Right cardiac atrium (tissue), 5 donors: ENCODE measurements at regions of chr5 and their contacts with region 1.

Region 1: DNA sequence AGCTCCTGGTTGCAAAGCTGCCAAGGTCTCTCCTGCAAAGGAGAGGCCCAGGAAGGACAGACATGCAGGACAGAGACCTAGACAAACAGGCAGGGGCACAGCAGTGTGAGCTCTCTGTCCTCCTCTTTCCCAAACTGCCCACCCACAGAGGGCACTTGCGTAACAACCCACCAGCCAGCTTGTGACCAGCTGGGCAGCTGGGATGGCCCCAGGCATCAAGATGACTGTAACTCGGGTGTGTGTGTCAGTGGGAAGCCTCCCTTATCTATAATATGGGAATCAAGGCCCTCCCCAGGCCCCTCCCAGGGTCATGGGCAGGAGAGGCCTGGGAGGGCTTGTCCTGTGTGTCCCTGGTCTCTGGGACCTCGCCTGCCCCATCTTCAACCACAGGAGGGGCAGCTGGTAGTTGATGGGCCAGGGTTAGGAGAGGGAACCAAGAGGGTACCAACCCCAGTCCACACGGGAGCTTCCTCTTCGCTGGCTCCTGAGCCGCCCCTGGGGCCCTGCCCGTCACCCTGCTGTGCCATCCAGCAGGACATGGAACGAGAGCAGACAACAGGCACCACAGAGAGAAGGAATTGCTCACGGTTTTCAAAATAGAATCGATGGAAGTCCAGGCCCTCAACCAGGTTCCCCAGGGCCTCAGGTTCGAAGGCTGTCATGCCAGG is 37.9 kb downstream of the SLC6A7 start:
- DNase-seq: no peak
- ATAC-seq: no peak
- H3K4me3 ChIP-seq: no peak overlapping the region
- H3K27ac ChIP-seq: no peak overlapping the region
- H3K4me1 ChIP-seq: no peaks in the 10 kb centered on the region
- H3K27me3 ChIP-seq: no peaks in the 10 kb centered on the region

Region 2: GRCh38 chr5:150036513-150036912 is 191.2 kb before region 1 on chr5:
- intact Hi-C with region 1: loop called in 1 of 4 experiments (anchors 10 kb)
- DNase-seq: peak; percentile 64 to 69 (median 69)
- ATAC-seq: peak; percentile 87 to 88
- H3K4me3 ChIP-seq: no peak overlapping the region
- H3K27ac ChIP-seq: no peak overlapping the region
- H3K4me1 ChIP-seq: no peaks in the 10 kb centered on the region
- H3K27me3 ChIP-seq: no peaks in the 10 kb centered on the region

Region 3: DNA sequence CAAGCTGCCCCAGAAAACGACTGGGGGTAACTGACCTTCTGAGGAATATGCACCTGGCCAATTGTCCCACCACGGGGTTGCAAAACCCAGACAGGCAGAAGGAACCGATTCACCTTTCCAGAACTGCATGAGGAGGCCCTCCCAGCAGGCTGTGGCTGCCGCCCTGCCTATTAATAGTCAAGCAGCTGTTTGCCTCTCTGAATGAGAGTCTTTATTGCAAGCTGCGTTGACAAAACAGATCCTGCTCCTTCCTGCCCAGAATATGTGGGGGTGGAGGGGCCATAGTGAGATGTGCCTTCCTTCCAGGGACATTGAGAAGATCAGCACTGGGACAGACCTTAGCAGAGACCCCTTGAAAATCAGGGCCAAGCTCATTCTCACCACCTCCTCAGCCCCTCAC is 111.4 kb after region 1 on chr5:
- intact Hi-C with region 1: no loop called
- DNase-seq: no peak
- ATAC-seq: no peak
- H3K4me3 ChIP-seq: no peak overlapping the region
- H3K27ac ChIP-seq: no peak overlapping the region
- H3K4me1 ChIP-seq: no peaks in the 10 kb centered on the region
- H3K27me3 ChIP-seq: no peaks in the 10 kb centered on the region